ENCODE measurements at regions of chr6 and their contacts with region 1.

Region 1: GRCh38 chr6:75526502-75527127 is 33.0 kb upstream of the FILIP1 start:
- DNase-seq: peak; percentile 52
- ATAC-seq: peak; percentile 85 to 89

Region 2: DNA sequence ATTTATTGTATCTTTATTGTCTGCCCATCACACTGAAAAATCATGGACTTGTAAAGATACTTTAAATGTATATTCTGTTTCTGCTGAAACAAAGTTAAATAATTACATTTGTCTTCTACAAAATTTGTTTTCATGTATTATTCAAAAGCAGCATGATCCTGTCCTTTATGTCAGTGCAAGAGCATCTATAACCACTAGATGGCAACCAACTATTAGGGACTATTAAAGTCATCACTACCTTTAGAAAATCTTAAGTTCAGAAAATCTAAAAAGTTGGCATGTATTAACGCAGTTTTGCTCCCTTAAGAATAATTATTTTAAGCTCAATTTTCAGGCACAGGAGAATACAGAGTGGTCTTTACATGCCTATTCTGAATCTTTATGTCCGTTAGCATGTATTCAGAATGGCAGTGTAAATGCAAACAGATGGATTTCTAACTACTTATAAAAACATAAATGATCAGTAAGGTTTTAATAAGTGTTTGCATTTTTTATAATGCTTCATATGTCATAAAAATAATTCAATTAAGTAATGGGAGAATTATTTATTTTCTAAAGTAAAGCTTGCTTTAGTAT is 259.8 kb before region 1 on chr6:
- intact Hi-C with region 1: loop called (anchors 2 to 10 kb)
- DNase-seq: no peak
- ATAC-seq: peak; percentile 57 to 72